ENCODE measurements at regions of chr1 and their contacts with region 1.

Region 1: DNA sequence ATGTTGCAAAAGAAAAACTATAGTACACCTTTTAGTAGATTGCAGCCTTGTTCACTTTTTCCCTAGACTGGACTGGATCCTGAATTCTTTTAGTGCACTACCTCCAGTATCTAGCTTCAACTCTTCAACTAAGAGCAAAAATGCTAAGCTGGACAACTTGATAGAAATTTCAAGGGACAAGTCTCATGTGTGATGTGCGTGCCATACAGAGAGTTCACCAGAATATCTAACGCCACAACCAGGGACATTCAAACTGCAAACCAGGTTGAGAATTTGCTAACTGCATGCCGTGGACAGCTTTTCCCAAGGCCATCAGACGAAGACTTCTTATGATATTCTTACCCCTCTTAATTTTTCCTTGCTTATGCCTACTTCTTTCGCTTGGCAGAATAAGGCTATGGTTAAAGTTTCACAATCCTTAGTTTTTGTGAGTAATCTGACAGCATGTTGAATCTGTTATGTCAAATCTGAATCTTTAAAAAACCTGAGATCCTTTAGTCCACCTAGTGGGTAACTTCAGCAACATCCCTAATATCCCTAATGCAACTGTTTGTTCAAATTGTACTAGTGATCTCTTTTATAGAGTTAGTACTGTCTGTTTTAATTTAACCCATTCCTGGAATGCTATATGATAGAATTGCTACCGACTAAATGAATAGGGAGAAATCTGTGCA is 66.4 kb downstream of the DDAH1 start:
- DNase-seq: no peak

Region 2: DNA sequence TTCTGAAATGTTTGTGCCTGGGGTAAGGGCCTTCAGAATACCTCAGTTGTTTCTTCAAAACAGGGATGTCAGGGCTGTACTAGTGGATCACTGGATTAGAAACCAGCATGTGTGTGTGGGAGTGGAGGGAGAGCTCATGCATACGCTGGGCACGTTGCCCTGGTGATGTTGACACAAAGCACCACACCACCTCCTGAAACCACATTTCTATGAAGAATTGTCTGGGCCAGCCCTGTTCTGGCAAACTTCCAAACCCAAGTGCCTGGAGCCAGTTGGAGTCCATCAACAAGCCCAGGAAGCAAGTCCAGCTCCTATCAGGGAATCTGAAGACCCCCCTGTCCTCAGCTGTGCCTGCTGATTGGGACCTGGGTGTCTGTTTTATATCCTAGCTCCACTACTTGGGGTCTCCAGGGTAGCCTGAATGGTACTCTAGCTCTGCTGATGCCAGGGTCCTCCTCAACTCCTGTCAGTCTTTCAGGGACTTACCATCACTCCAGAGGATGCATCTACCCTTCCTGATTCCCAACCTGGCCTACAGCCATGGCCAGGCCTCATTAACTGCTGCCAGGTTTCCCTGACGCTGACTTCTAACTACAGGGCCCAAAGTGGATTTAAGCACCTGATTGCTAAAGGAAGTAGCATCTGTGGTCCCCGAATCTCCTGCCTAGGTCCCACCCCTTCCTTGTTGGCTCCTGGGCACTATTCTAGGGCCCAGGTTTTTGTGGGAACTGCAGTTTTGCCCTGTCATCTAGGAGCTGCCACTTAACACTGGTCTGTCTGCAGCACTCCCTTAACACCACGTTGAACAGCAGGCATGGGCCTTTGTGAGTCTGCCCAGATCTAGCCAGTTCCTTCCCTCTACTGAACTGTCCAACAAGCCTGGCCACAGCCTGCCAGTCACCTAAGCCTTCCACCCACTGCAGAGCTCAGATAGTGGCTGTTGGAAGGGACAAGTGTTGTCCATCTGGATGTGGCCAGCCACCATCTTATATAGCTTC is 551.0 kb before region 1 on chr1:
- intact Hi-C with region 1: no loop called
- DNase-seq: peak; percentile 82

Region 3: GRCh38 chr1:85313888-85314696 is 84.4 kb before region 1 on chr1:
- intact Hi-C with region 1: loop called in 1 of 2 experiments (anchors 10 kb)
- DNase-seq: no peak

Region 4: GRCh38 chr1:85330711-85331290 is 67.7 kb before region 1 on chr1:
- intact Hi-C with region 1: loop called in 1 of 2 experiments (anchors 5 kb)
- DNase-seq: no peak

Measured in posterior vena cava (tissue), 2 donors.